Activated CD4-positive, alpha-beta T cell treated with anti-CD3 and anti-CD28 coated beads for 36 hours (primary cell): ENCODE measurements at regions of chr18 and their contacts with region 1.

Region 1: DNA sequence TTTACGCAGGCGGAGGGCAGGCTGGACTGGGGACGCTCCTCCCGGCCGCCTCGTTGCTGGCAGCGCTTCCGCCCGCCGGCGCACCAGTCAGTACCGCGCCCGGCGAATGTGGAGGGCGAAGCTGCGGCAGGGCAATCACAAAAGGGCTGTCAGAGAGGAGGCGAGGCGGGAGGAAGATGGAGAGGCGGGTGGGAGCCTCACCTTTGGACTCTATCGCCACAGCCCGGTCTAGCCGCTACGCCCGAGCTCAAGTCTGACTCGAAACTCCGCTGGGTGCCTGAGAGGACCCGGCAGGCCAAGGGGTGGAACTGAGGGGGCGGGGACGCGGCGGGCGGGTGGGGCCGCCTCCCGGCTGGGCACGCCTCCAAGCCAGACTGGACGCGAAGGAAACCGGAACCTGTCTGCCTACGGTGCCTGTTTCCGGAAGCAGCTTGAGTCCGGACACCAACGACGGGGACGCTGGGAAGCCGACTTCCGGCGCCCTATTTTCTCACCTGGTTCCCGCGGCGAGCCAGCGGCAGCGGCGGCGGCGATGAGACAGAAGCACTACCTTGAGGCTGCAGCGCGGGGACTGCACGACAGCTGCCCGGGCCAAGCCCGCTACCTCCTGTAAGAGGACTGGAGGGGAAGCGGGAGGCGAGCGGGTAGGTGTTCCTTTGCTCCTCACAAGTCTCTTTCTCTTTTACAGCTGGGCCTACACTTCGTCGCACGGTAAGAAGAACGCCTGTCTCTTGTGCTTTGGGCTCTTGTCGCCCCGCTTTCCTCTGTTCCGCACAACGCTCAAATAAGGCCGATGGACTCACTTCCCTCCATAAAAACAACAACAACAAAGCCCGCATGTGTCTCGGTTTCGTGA is at the start of gene RMP24:
- DNase-seq: peak; percentile 97
- ATAC-seq: peak; percentile 87
- H3K4me3 Mint-ChIP-seq: peak within 1 kb of the TSS; percentile 99
- H3K27ac Mint-ChIP-seq: peak within 1 kb of the TSS; percentile 96
- H3K4me1 Mint-ChIP-seq: peaks cover 49% of the 10 kb centered on the region
- H3K27me3 Mint-ChIP-seq: no peaks in the 10 kb centered on the region

Region 2: DNA sequence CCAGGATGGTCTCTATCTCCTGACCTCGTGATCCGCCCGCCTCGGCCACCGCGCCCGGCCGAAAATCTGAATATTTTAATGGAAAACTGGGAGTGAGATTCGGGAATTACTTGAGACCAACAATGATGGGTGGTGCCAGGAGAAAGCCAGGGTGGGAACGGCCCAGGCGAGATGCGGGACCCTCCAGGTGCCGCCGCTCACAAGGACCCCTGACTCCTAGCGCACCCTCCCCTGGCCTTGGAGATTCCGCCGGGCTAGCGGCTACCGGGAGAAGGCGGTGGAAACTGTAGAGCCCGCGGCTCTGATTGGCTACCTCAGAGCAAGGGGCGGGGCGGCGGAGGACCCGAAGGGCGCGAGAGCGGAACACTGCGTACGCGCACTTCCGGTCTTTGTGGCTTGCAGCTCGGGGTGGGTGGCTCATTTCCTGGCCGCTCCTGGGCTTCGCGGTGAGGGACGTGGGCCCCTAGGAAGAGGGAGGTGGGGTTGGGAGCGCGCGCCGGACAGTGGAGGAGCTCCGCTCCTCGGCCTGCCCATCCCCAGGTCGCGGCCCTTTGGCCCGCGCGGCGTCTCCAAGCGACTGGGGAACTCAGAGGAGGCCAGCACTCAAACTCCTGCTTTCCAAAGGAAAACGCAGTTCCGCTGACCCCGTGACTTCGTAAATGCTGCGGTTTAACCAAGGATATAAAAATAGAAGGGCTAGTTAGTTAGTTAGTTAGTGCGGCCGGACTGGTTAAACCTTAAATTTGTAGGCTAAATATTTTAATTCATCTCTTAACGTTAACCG is 731.6 kb before region 1 on chr18 and contains the start of gene ZNF397:
- CTCF ChIA-PET with region 1: no interaction called
- POLR2A ChIA-PET with region 1: no interaction called
- intact Hi-C with region 1: loop called (anchors 2 to 10 kb)
- DNase-seq: peak; percentile 98
- ATAC-seq: peak; percentile 98
- H3K4me3 Mint-ChIP-seq: peak within 1 kb of the TSS; percentile 97
- H3K27ac Mint-ChIP-seq: peak within 1 kb of the TSS; percentile 97
- H3K4me1 Mint-ChIP-seq: peaks cover 31% of the 10 kb centered on the region
- H3K27me3 Mint-ChIP-seq: no peaks in the 10 kb centered on the region
- total RNA-seq, gene ZNF397: 21.3 to 21.9 TPM

Region 3: DNA sequence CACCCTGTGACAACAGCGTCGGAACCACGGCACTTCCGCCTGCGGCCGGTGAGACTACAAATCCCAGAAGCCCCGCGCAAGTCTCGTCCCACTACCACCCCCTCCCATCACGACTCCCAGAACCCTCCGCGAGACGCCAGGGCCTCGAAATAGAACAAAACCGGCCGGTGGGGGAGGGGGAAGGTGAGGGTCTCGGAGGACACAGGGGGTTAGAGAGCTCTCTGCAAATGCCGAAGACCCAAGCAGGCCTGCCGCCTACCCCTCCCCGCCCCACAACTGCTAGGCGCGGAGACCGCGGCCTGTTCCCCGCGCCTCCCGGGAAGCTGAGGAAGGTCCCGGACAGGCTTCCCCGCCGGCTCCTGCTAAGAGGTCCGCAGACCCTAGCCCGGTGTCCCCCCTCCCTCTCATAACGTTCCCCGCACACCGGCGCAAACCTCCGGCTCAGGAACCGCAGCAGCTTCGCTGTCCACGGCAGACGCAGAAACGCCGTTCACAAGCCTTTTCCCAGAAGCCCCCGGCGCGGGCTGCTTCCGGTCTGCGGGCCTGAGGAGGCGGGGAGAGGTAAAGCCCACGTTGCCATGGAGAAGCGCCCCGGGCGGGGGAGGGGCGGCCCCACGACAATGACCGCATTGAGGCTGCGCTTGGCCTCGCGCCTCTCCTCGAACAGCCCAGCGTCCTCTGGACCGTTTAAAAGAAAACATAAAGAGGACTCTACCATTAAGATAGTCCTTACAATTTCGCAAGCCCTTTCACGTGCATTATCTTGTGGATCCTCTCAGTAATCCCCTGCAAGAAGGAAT is 628.3 kb before region 1 on chr18 and contains the start of gene ZNF24:
- CTCF ChIA-PET with region 1: no interaction called
- POLR2A ChIA-PET with region 1: no interaction called
- intact Hi-C with region 1: loop called in 1 of 2 experiments (anchors 1 kb)
- DNase-seq: peak; percentile 96
- ATAC-seq: peak; percentile 93
- H3K4me3 Mint-ChIP-seq: peak within 1 kb of the TSS; percentile 86
- H3K27ac Mint-ChIP-seq: peak within 1 kb of the TSS; percentile 94
- H3K4me1 Mint-ChIP-seq: peaks cover 38% of the 10 kb centered on the region
- H3K27me3 Mint-ChIP-seq: no peaks in the 10 kb centered on the region
- total RNA-seq, gene ZNF24: 31.7 to 50.9 TPM

Region 4: GRCh38 chr18:35407871-35408481 is 564.4 kb before region 1 on chr18:
- CTCF ChIA-PET with region 1: no interaction called
- POLR2A ChIA-PET with region 1: no interaction called
- intact Hi-C with region 1: loop called in 1 of 2 experiments (anchors 5 kb)
- DNase-seq: peak; percentile 49
- ATAC-seq: peak; percentile 92
- H3K4me3 Mint-ChIP-seq: no peak overlapping the region
- H3K27ac Mint-ChIP-seq: no peak overlapping the region
- H3K4me1 Mint-ChIP-seq: peaks cover 10% of the 10 kb centered on the region
- H3K27me3 Mint-ChIP-seq: peaks cover 6% of the 10 kb centered on the region

Region 5: DNA sequence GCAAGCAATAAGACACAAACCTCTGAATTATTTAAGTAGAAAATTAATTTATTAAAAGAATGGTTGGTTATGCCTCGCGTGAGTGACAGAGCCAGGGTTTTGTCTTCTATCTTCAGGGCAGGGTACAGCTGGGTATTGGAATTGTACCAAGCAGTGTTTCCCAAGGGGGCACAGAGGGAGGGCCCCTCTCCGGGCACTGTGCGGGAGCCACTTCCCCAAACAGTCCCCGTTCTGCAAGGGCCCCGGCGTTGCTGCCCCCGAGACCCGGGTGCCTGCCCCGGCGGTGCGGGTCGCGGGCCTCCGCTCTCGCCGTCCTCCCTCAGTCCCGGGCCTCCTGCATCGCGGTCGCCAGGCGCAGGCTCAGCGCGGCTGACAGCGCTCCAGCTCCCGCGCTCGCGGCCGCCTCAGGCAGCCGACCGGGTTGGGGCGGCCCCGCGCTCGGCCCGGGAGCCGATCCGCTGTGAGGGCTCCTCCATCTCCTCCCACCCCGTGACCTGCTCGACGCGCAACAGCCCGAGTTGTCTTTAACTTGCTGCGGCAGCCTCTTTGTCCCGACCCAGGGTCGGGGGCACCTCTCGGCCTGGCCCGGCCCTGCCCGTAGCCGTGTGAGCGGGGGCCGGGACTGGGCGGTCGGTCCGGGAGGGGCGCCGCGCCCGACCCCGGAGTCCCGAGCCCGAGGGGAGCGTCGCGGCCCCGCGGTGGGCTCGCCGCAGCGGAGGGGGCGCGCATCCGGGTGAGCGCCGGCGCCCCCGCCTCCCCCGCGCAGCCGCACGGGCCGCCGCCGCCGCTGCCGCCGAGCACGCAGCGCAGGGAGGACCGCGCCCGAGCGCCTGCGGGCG is 391.5 kb before region 1 on chr18:
- CTCF ChIA-PET with region 1: no interaction called
- POLR2A ChIA-PET with region 1: no interaction called
- intact Hi-C with region 1: loop called (anchors 1 to 10 kb)
- DNase-seq: peak; percentile 72
- ATAC-seq: peak; percentile 61
- H3K4me3 Mint-ChIP-seq: peak overlapping the region; percentile 69
- H3K27ac Mint-ChIP-seq: peak overlapping the region; percentile 37
- H3K4me1 Mint-ChIP-seq: peaks cover 35% of the 10 kb centered on the region
- H3K27me3 Mint-ChIP-seq: peaks cover 17% of the 10 kb centered on the region

Region 6: DNA sequence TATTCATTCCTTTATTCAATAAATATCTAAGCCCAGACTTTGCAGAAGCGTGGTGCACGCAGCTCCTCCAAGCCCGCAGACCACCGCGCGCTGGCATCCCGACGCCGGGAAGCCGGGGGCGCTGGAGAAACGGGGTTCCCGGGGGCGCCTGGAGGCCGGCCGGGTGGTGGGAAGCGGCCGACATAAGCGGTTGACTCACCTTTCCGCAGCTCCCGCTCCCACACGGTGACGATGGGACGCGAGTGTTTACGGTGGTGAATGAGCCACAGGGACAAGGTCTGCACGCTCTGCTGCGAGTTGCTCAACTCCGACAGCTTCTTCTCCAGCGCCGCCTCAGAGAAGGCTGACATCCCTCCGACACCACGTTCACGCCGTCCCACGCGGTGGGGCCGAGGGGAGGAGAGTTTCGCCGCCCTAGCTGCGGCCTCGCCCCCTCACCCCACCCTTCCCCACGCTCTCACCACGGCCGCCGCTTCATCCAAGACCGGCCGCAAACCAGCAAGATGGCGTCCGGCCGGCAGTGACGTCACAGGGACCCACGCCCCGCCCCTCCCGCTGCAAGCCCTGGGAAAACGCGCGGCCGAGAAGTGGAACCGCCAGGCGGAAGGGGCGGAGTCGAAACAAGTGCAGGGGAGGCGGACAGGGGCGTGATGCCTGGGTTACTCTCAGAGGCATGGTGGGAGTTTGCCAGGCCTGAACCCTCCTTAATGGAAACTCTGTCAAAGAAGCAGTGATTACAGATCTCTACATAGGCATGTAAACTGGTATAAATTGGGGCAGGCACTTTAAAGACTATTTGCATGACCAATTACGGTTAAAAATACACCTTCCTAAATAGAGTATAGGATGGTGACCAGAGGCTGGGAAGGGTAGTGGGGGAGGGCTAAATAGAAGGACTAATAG is 94.9 kb after region 1 on chr18 and contains the start of gene RPRD1A:
- CTCF ChIA-PET with region 1: no interaction called
- POLR2A ChIA-PET with region 1: interaction called, 3 read pairs
- intact Hi-C with region 1: loop called (anchors 1 kb)
- DNase-seq: peak; percentile 99
- ATAC-seq: peak; percentile 96
- H3K4me3 Mint-ChIP-seq: peak within 1 kb of the TSS; percentile 78
- H3K27ac Mint-ChIP-seq: peak within 1 kb of the TSS; percentile 89
- H3K4me1 Mint-ChIP-seq: peaks cover 29% of the 10 kb centered on the region
- H3K27me3 Mint-ChIP-seq: peaks cover 3% of the 10 kb centered on the region
- total RNA-seq, gene RPRD1A: 27.9 to 32.1 TPM

Region 7: DNA sequence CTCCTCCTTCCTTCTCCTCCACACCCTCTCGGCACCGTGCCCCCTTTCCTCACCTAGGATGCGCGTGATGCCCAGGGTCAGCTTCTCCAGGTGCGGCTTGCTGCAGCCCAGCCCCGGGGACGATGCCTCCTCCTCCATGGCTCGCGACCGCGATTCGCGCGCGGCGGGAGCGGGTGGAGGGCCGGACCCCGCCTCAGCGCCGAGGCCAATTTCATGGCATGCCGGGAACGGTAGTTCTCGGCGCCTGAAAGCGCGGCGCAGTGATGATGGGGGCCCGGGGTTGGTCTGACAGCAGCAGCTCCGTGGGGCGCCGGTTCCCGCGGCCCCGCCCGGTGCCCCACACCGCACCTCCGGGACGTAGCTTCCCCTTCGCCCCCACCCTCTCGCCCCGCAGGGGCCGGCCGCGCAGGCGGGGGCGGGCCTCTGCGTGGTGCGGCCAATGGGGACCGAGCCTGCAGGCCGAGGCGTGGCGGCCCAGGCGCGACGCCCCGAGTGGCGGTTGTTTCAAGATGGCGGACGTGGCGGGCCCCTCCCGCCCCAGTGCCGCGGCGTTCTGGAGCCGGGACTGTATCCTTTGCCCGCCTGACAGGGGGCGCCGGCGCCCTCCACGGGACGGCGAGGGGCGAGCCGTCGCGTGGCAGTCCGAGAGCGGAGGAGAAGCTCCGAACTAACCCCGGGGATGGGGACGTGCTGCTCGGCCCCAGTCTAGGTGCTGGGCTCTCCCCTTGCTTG is 856.4 kb after region 1 on chr18 and contains the starts of genes KIAA1328 and TPGS2:
- CTCF ChIA-PET with region 1: no interaction called
- POLR2A ChIA-PET with region 1: no interaction called
- intact Hi-C with region 1: loop called in 1 of 2 experiments (anchors 1 kb)
- DNase-seq: peak; percentile 92
- ATAC-seq: peak; percentile 92
- H3K4me3 Mint-ChIP-seq: peak within 1 kb of the TSS; percentile 77
- H3K27ac Mint-ChIP-seq: peak within 1 kb of the TSS; percentile 95
- H3K4me1 Mint-ChIP-seq: peaks cover 35% of the 10 kb centered on the region
- H3K27me3 Mint-ChIP-seq: no peaks in the 10 kb centered on the region
- total RNA-seq, gene KIAA1328: 5.8 to 7.4 TPM
- total RNA-seq, gene TPGS2: 87.6 to 158 TPM